Cardiac septum (tissue), 1 donor: ENCODE measurements at regions of chr10 and their contacts with region 1.

Region 1: GRCh38 chr10:14812271-14812670 is 25.6 kb downstream of the CDNF start:
- DNase-seq: no peak

Region 2: DNA sequence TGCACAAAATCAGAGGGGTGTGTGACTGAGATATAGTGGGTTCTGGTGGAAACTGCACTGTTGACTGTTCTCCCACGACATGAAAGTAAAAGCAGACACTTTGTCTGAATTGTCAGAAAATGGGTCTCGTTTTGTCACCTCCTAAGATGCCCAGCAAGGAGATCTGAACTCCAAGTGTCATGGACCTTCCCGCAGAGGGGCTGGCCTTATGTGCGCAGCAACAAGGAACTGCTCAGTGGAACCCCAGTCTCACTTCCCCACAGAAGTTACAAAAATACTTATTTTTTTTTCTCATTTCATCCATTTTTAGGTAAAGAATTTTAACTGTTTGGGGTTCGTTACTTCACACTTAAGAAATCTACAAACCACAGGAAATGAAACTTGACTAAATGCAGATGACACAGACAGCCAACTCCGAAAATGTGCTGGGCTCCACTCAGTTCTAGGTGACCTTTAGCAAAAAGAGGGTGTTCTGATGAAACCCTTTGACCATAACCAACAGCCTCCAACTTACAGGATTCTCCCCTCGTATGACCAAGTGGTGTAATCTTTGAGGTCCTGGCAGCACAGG is 152.6 kb before region 1 on chr10:
- intact Hi-C with region 1: loop called (anchors 5 kb)
- DNase-seq: no peak

Region 3: DNA sequence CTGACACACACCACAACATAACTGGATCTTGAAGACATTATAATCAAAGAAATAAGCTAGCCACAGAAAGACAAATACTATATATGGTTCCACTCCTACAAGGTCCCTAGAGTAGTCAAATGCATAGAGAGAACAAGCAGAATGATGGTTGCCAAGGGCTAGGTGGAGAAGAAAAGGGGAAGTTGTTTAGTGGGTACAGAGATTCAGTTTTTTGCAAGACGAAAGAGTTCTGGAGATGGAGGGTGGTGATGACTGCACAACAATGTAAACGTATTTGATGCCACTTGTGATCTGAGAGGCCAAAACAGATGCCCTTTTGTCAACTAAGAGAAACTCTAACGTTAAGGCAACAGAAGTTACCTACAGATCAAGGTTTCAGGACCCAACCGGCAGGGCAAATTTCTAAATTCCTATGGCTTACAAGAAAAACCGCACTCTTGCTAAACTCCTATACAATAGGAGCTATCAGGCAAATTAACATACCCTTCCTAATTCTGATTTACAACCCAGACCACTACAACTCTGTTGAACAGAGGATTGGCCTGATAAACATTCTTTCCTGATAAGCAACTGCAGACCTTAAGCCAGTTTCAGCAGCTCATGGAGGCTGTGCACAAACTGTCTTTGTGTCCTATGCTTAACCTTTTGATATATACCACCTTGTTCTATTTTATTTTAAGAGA is 106.6 kb before region 1 on chr10:
- intact Hi-C with region 1: no loop called
- DNase-seq: no peak